SK-N-SH (cell line): ENCODE measurements at regions of chr2 and their contacts with region 1.

Region 1: GRCh38 chr2:174771631-174772471 is 7.6 kb upstream of the CHRNA1 start:
- DNase-seq: peak; percentile 81
- H3K4me3 ChIP-seq: peak overlapping the region in 1 of 2 experiments; percentile 29; a peak in 2 of 4 replicates
- H3K27ac ChIP-seq: peak overlapping the region; percentile 36 to 80; a peak in 3 of 4 replicates
- H3K4me1 ChIP-seq: peaks cover 0 to 22% of the 10 kb centered on the region in 2 experiments; a peak in 2 of 4 replicates
- H3K27me3 ChIP-seq: no peaks in the 10 kb centered on the region
- CTCF ChIP-seq: peak; percentile 90
- EP300 ChIP-seq: no peak; a peak in 1 of 4 replicates
- RAD21 ChIP-seq: peak; percentile 96

Region 2: GRCh38 chr2:174748948-174749347 is 22.9 kb before region 1 on chr2:
- CTCF ChIA-PET with region 1: interaction called, 66 read pairs
- POLR2A ChIA-PET with region 1: no interaction called
- DNase-seq: peak; percentile 77
- H3K4me3 ChIP-seq: no peak overlapping the region
- H3K27ac ChIP-seq: no peak overlapping the region
- H3K4me1 ChIP-seq: no peaks in the 10 kb centered on the region
- H3K27me3 ChIP-seq: no peaks in the 10 kb centered on the region
- CTCF ChIP-seq: peak; percentile 87
- EP300 ChIP-seq: no peak
- RAD21 ChIP-seq: peak; percentile 87

Region 3: DNA sequence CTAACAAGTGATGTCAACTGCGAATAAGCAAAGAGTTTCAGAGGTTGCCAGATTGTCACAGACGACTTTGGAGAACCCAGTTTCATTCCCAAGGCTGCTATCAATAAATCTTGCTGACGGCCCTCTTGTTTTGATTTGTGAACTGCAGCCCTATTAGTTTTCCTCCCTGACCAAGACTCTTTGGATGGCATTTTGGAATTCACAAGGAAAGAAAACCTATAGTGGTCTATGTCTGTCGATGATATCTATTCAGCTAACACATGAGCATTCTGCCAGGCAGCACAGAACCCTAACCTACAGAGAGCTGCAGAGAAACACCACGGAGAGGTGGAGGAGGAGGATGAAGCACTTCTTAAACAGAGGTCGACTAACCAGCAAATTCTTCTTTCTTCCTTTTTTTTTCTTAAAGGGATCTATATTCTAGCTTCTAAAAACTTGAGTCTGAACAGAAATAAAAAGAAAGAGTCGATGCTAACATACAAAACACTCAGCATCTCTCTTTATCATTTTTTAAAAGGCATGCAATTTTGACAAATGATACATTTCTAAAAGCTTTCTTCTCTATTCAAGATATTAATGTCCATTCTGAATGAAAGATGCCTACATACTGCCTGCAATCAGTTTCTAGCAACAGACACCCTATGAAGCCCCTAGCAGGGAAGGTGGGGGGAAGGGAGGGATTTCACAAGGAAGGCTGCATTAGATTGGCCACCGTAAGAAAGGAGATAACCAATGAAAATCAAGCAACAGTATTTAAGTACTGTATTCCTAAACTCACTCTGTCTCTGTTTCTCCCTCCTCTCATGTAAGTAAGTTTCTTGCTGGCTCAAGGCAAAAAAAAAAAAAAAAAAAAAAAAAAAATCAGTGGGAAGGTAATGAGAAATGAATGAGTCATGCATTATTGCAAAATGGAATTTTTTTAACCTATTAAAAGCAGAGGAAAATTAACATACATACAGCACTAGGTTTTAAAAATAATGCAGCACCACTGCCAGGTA is 75.4 kb after region 1 on chr2:
- CTCF ChIA-PET with region 1: interaction called, 19 read pairs
- POLR2A ChIA-PET with region 1: interaction called, 5 read pairs
- DNase-seq: peak; percentile 41
- H3K4me3 ChIP-seq: peak overlapping the region; percentile 51 to 67
- H3K27ac ChIP-seq: peak overlapping the region; percentile 73 to 93
- H3K4me1 ChIP-seq: peaks cover 0 to 38% of the 10 kb centered on the region in 2 experiments; a peak in 3 of 4 replicates
- H3K27me3 ChIP-seq: no peaks in the 10 kb centered on the region
- CTCF ChIP-seq: no peak
- EP300 ChIP-seq: 0 out of 4 replicates have a peak, but pooled peaks of 1 of the 2 experiments have one; percentile 22
- RAD21 ChIP-seq: no peak

Region 4: DNA sequence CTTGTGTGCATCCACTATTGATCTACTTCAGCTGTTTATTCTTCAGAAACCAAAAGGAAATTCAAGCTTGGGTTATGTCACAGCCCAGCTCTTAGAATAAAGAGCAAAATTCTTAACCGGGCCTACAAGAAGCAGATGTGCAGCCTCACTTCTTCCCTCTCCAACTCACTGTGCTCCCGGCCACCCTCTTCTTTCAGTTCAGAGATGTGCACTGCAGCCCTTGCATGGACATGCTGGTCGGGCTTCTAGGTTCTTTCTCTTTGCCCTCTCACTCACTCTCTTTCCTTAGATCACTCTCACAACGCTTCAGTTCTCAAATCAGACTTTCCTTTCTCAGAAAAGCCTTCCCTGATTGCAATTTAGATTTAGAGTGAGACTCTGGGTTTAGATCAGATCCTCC is 129.2 kb after region 1 on chr2:
- CTCF ChIA-PET with region 1: interaction called, 12 read pairs
- POLR2A ChIA-PET with region 1: no interaction called
- DNase-seq: no peak
- H3K4me3 ChIP-seq: no peak overlapping the region
- H3K27ac ChIP-seq: peak overlapping the region in 1 of 2 experiments; percentile 41; a peak in 1 of 4 replicates
- H3K4me1 ChIP-seq: peaks cover 0 to 18% of the 10 kb centered on the region in 2 experiments; a peak in 1 of 4 replicates
- H3K27me3 ChIP-seq: no peaks in the 10 kb centered on the region
- CTCF ChIP-seq: no peak
- EP300 ChIP-seq: no peak
- RAD21 ChIP-seq: no peak

Region 5: DNA sequence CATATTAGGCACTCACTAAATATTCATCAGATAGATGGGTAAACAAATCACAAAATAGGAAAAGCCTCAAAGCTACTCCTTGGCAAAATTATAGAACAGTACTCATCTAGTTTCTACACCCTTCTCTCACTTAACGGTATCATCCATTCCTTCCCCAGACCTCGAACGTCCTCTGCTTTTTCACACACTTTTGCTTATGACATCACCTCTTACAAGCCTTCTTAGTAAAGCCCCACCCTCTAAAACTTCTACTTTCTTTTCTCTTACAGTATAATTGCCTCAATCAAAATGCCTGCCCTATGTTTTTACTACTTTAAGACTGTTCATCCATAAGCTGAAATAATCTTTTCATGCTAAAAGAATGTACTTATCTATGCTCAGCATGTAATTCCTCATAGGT is 225.3 kb after region 1 on chr2:
- CTCF ChIA-PET with region 1: interaction called, 316 read pairs
- POLR2A ChIA-PET with region 1: no interaction called
- DNase-seq: no peak
- H3K4me3 ChIP-seq: no peak overlapping the region
- H3K27ac ChIP-seq: no peak overlapping the region
- H3K4me1 ChIP-seq: peaks cover 0 to 25% of the 10 kb centered on the region in 2 experiments; a peak in 2 of 4 replicates
- H3K27me3 ChIP-seq: no peaks in the 10 kb centered on the region
- CTCF ChIP-seq: no peak
- EP300 ChIP-seq: no peak
- RAD21 ChIP-seq: no peak